ENCODE measurements at regions of chr18 and their contacts with region 1.

Region 1: DNA sequence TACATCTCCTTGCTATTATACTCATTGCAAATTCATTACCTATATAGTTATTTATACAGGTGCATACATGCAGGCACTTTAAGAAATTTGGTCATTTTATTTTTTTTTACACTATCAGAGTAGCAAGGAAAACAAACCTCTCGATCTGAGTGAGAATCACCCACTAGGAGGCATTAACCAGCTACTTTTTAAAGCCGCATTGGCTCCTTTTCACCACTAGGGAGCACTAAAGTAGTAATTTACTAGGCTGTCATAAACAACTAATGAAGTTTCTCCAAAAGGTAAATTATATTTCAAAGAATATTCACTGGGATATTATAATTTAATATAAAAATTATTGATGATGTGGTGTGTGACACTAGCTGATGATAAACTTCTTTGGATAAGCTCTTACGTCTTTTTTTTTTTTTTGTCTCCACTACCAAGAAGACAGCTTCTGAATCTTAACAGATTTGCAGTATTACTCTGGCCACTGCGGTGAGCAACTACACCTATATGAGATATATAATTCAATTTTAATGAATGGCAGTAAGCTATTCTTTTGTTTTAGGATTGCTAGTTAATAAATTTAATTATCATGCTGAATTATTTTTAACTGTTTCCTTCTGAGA is 101.9 kb downstream of the NOL4 start:
- DNase-seq: peak; percentile 34
- H3K4me3 ChIP-seq: no peak overlapping the region
- H3K27ac ChIP-seq: no peak overlapping the region
- H3K4me1 ChIP-seq: peaks cover 19% of the 10 kb centered on the region
- H3K27me3 ChIP-seq: no peaks in the 10 kb centered on the region
- CTCF ChIP-seq: peak; percentile 95 to 98

Region 2: DNA sequence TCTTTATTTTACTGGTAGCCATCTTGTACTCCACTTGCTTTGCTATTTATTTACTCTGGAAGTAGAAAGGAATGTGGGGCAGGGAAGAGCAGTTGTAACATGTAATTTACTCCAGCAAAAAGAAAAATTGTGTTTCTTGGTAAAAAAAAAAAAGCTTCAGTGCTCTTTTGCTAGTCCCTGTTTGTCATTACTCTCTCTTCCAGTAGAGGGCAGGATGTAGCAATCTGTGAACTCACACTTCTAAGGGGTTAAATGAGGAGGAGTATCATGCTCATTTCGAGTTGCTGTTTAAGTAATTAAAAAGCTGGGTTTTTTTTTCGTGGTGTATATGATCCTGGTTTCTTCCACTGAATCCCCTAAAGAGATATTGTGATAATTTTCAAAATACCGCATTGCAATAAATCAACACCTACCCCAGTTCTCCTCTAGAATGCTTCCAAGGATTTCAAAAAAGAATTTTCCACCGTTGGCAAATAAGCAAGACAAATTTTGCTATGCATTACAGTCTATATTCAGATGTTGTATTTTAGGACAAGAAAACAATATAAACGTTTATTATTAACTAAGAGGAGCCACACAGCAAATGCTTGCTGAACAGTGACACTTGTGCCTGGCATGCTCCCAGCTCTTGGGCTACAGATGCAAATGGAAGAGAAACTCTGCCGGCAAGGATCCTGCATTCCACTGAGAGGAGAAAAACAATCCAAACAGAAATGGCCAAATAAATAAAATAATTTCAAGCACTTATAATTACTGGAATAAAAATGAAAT is 283.2 kb before region 1 on chr18:
- CTCF ChIA-PET with region 1: interaction called, 4 read pairs
- dilution Hi-C with region 1: no loop called
- in situ Hi-C with region 1: no loop called
- intact Hi-C with region 1: loop called (anchors 2 kb)
- DNase-seq: peak; percentile 39
- H3K4me3 ChIP-seq: no peak overlapping the region
- H3K27ac ChIP-seq: no peak overlapping the region
- H3K4me1 ChIP-seq: no peaks in the 10 kb centered on the region
- H3K27me3 ChIP-seq: no peaks in the 10 kb centered on the region
- CTCF ChIP-seq: peak; percentile 85 to 86

Region 3: DNA sequence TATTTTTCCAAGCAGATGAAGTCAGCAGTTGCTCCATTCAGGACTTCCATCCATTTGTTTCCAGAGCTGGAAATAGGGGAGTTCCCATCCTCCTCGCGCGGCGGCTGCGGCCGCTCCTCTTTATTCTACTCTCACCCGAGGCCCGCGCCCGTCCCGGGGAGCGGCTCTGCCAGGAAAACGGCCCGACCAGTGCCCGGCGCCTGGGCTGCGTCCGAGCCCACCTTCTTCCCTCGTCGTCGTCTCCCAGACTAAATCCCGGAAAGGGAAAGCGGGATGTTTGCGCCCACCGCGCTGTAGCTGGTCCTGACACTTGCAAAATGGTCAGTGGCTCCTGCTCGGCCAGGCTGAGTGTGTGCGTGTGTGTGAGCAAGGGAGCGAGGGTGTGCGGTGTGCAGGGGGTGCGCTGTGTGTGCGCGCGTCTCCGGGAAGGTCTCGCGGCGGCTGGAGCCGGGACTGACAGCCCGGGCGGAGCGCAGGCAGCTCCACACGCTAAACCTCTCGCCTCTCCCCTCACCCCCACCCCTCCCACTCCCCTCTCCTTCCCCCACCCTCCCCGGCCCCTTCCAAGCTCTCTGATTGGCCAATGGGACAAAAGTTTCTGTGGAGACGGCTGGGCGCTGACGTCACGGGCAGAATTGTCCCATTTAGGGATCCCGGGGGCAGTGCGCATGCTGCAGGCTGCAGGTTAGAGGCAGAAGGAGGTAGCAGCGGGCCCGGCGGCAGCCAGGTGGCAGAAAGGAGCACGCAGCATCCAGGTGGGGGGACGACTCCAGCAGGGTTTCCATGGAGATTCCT is 101.8 kb after region 1 on chr18 and contains the start of gene NOL4:
- CTCF ChIA-PET with region 1: no interaction called
- dilution Hi-C with region 1: no loop called
- in situ Hi-C with region 1: no loop called
- intact Hi-C with region 1: loop called (anchors 10 kb)
- DNase-seq: peak; percentile 39
- H3K4me3 ChIP-seq: peak within 1 kb of the TSS; percentile 11 to 45 (median 15)
- H3K27ac ChIP-seq: no peak within 1 kb of the TSS
- H3K4me1 ChIP-seq: peaks cover 27% of the 10 kb centered on the region
- H3K27me3 ChIP-seq: peaks cover 47% of the 10 kb centered on the region
- CTCF ChIP-seq: peak; percentile 33 to 70
- total RNA-seq, gene NOL4: 0.33 TPM in 1 of 2 donors, not detected in the other

Region 4: GRCh38 chr18:34322365-34323289 is 199.8 kb after region 1 on chr18:
- CTCF ChIA-PET with region 1: interaction called, 5 read pairs
- dilution Hi-C with region 1: no loop called
- in situ Hi-C with region 1: loop called (anchors 5 to 10 kb)
- intact Hi-C with region 1: loop called (anchors 1 kb)
- DNase-seq: peak; percentile 21
- H3K4me3 ChIP-seq: no peak overlapping the region
- H3K27ac ChIP-seq: no peak overlapping the region
- H3K4me1 ChIP-seq: no peaks in the 10 kb centered on the region
- H3K27me3 ChIP-seq: no peaks in the 10 kb centered on the region
- CTCF ChIP-seq: peak; percentile 68 to 82

Region 5: GRCh38 chr18:34493099-34493544 is 370.3 kb after region 1 on chr18:
- CTCF ChIA-PET with region 1: no interaction called
- dilution Hi-C with region 1: no loop called
- in situ Hi-C with region 1: no loop called
- intact Hi-C with region 1: loop called (anchors 10 kb)
- DNase-seq: peak; percentile 86
- H3K4me3 ChIP-seq: peak overlapping the region; percentile 45 to 63 (median 46)
- H3K27ac ChIP-seq: peak overlapping the region; percentile 15
- H3K4me1 ChIP-seq: no peaks in the 10 kb centered on the region
- H3K27me3 ChIP-seq: peaks cover 5% of the 10 kb centered on the region
- CTCF ChIP-seq: no peak